ENCODE measurements at regions of chr13 and their contacts with region 1.

Region 1: DNA sequence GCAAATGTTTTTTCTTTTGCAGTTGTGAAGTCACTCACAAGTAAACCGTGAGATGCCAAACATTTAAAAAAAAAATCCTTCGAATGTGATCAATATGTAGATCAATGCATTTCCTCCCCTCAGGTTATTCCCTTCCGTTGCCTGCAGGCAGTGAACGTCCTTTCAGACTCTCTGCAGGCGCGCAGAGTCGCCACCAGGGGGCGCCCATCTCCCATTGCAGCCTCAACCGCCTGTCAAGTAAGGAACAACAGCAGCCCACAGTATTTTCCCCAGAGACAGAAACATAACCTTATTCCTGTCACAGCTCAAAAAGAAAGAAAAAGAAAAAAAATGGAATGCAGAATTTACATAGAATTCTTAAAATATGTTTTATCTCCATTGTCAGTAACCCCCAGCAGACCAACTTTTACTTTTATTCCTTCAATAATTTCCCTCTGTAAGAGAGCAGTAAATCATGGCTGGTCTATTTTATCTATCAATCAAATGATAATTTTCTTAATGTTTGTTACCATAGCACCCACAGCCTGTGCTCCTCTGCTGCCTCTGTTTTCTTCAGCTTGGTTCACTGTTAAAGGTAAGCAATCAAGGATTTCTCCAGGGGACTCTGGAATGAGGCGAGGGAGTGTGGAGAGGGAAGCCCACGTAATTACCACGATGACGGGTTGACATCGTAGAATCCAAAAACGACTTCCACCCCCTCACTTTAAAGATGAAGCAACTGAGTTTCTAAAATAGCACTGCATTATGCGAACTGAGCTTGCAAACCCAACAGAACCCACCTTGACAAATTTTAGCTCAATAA is 637.6 kb upstream of the ARGLU1 start:
- DNase-seq: peak; percentile 56
- H3K4me3 ChIP-seq: no peak overlapping the region
- H3K27ac ChIP-seq: no peak overlapping the region
- H3K4me1 ChIP-seq: peaks cover 2% of the 10 kb centered on the region
- H3K27me3 ChIP-seq: no peaks in the 10 kb centered on the region
- CTCF ChIP-seq: peak; percentile 99

Region 2: GRCh38 chr13:107649079-107649478 is 443.6 kb after region 1 on chr13:
- intact Hi-C with region 1: loop called (anchors 5 kb)
- DNase-seq: no peak
- H3K4me3 ChIP-seq: no peak overlapping the region
- H3K27ac ChIP-seq: no peak overlapping the region
- H3K4me1 ChIP-seq: no peaks in the 10 kb centered on the region
- H3K27me3 ChIP-seq: no peaks in the 10 kb centered on the region
- CTCF ChIP-seq: no peak

Region 3: GRCh38 chr13:108155185-108156106 is 949.9 kb after region 1 on chr13:
- intact Hi-C with region 1: loop called (anchors 5 kb)
- DNase-seq: peak; percentile 77
- H3K4me3 ChIP-seq: no peak overlapping the region
- H3K27ac ChIP-seq: peak overlapping the region; percentile 63
- H3K4me1 ChIP-seq: no peaks in the 10 kb centered on the region
- H3K27me3 ChIP-seq: no peaks in the 10 kb centered on the region
- CTCF ChIP-seq: peak; percentile 93

Measured in colonic mucosa (tissue), 4 donors.